T-cell (primary cell): ENCODE measurements at regions of chr3 and their contacts with region 1.

Region 1: GRCh38 chr3:158379517-158379916 is 191.5 kb upstream of the MLF1 start:
- DNase-seq: no peak
- ATAC-seq: no peak
- H3K4me3 ChIP-seq: no peak overlapping the region
- H3K4me3 Mint-ChIP-seq: no peak overlapping the region
- H3K27ac ChIP-seq: no peak overlapping the region
- H3K27ac Mint-ChIP-seq: no peak overlapping the region
- H3K4me1 ChIP-seq: no peaks in the 10 kb centered on the region
- H3K4me1 Mint-ChIP-seq: peaks cover 0 to 5% (median 0%) of the 10 kb centered on the region in 3 donors
- H3K27me3 ChIP-seq: no peaks in the 10 kb centered on the region
- H3K27me3 Mint-ChIP-seq: no peaks in the 10 kb centered on the region

Region 2: DNA sequence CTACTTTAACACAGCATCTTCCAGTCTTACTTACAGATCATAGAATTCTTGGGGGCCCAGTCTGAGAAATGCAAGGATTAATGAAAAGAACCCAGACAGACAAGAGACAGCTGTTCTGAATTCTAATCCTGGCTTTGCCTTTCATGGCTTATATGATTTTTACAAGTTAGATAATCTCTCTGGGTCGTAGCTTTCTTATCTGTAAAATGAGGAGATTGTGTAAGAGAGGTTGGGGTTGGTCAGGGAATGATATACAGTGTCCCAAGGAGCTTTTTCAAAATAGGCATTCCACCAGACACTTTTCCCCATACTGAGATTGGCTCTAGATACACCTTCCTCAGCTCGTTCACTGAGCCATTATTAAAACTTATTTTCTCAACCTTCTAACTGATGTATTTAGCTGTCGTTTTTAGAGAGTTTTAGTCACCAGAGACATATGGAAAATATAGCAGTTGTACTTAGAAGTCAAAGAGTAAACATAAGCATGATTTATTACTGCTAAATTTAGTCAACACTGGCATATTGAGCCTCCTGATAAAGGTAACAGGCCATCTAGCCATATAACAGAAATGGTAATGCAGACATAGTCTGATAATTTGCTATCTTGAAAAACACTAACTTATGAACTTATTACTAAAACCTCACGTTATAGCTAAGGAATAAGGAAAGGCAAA is 28.5 kb after region 1 on chr3:
- CTCF ChIA-PET with region 1: no interaction called
- POLR2A ChIA-PET with region 1: no interaction called
- DNase-seq: no peak
- ATAC-seq: no peak
- H3K4me3 ChIP-seq: no peak overlapping the region
- H3K4me3 Mint-ChIP-seq: no peak overlapping the region
- H3K27ac ChIP-seq: no peak overlapping the region
- H3K27ac Mint-ChIP-seq: no peak overlapping the region
- H3K4me1 ChIP-seq: no peaks in the 10 kb centered on the region
- H3K4me1 Mint-ChIP-seq: no peaks in the 10 kb centered on the region
- H3K27me3 ChIP-seq: no peaks in the 10 kb centered on the region
- H3K27me3 Mint-ChIP-seq: no peaks in the 10 kb centered on the region

Region 3: GRCh38 chr3:158434412-158435038 is 55.0 kb after region 1 on chr3:
- CTCF ChIA-PET with region 1: interaction called in 1 of 2 experiments, 10 read pairs
- POLR2A ChIA-PET with region 1: no interaction called
- DNase-seq: peak in 17 of 35 experiments; percentile 0 to 50 (median 3)
- ATAC-seq: no peak
- H3K4me3 ChIP-seq: no peak overlapping the region
- H3K4me3 Mint-ChIP-seq: no peak overlapping the region
- H3K27ac ChIP-seq: no peak overlapping the region
- H3K27ac Mint-ChIP-seq: no peak overlapping the region
- H3K4me1 ChIP-seq: no peaks in the 10 kb centered on the region
- H3K4me1 Mint-ChIP-seq: no peaks in the 10 kb centered on the region
- H3K27me3 ChIP-seq: no peaks in the 10 kb centered on the region
- H3K27me3 Mint-ChIP-seq: no peaks in the 10 kb centered on the region